ENCODE measurements at regions of chr9 and their contacts with region 1.

Region 1: DNA sequence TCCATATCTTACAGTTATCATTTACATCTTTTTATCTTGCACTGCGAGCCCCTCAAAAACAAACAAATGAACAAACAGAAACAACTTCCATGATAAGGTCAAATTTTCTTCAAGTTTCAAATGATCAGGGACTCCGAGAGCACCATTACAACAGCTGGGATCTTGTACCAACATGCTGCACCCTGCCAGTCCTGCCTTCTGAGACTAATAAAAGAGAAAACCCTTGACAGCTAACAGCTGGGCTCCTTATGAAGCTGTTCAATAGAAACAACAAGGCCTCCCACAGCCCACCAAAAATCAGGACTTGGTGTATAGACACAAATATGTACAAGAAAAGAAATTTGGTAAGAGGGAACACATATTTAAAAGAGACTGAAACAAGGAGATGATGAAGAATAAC is 985.3 kb upstream of the DMAC1 start:
- DNase-seq: no peak
- H3K4me3 ChIP-seq: peak overlapping the region in 19 of 59 donors; percentile 1 to 48 (median 21)
- H3K27ac ChIP-seq: peak overlapping the region in 38 of 59 donors; percentile 1 to 77 (median 52)
- H3K27me3 ChIP-seq: no peaks in the 10 kb centered on the region
- CTCF ChIP-seq: no peak

Region 2: DNA sequence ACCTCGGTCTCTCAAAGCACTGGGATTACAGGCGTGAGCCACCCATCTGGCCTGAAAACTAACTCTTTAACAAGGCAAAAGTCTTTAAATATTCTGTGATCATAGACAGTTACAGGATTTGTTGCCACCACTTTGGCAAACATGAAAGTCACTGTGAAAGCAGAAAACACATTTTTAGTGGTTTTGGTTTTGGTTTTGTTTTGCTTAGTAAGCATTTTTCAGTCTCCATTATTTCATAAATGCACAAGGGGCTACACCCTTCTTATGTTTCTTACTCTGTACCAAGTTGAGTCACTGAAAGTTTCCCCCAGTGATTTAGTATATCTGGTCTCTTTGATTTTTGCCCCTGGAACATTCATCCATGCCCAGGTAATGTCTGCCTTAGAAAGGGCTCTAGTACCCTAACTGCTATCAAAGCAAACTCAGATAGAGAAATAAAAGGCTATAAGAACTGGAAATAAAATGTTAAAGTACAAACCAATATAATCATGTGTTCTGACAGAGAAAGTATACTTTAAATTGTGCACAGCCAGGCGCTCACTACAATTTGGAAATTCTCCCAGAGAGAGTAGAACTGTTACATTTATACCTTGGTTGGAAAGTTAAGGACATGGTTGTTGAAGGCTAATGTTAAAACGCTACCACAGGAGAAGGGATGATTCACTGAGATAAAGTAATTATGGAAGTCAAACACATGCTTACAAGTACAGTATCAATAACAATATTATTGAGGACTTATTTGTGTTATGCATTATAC is 37.2 kb after region 1 on chr9:
- intact Hi-C with region 1: loop called in 1 of 2 experiments (anchors 5 kb)
- DNase-seq: no peak
- H3K4me3 ChIP-seq: no peak overlapping the region
- H3K27ac ChIP-seq: peak overlapping the region in 11 of 59 donors; percentile 1 to 51 (median 21)
- H3K27me3 ChIP-seq: no peaks in the 10 kb centered on the region
- CTCF ChIP-seq: no peak

Region 3: DNA sequence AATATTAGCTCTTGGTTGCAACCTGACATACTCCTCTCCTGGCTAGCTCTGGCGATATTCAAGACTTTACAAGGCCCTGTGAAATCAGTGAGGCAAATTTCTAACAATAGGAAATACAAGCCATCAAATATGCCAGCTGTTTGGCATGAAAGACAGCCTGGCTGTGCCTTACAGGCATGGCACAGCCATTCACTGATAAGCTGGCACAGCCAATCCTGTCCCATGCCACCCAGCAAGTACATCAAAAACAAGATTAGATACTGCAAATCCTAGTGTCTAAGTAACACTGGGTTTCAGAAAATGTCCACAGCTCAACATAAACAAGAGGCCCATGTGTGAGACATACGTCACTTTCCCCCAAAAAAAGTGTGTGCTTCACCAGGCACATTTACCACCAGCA is 60.5 kb after region 1 on chr9:
- intact Hi-C with region 1: loop called in 1 of 2 experiments (anchors 10 kb)
- DNase-seq: peak in 8 of 10 donors; percentile 41 to 84 (median 71)
- H3K4me3 ChIP-seq: peak overlapping the region in 28 of 59 donors; percentile 1 to 50 (median 16)
- H3K27ac ChIP-seq: peak overlapping the region; percentile 32 to 99 (median 92)
- H3K27me3 ChIP-seq: no peaks in the 10 kb centered on the region
- CTCF ChIP-seq: peak in 2 of 56 donors; percentile 11 to 15

Region 4: DNA sequence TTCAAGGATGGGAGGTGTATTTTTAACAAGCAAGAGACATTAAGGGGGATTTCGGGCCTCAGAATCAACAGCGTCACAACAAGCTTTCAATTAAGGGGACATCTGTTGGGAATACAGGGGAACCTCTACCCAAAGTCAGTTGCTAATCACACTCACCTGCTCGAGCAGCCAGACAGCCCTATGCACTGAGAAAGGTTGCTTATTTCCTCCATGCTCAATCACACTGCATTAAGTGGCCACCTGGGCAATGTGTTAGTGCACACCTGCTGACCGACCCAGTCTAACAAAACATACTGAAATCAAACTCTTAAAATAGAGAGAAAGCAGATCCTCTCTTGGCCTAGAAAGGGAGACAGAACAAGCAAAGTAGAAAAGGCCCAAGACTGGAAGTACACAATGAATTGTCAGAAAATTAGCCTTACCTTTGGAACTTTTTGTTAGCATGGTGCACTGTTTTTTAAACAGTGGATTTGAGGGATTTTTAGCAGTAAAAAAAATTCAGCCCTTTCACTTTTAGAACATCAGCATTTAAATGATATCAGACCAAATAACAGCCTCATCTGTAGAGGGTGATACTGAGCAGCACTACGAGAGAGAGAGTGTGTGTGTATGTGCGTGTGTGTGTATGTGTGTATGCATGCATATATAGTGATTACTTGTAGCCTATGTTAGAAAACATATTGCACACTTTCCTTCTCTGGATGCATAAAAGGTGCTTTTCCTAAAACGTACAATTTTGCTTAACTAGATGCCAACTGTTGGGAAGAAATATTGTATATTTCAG is 133.3 kb after region 1 on chr9:
- intact Hi-C with region 1: no loop called
- DNase-seq: no peak
- H3K4me3 ChIP-seq: no peak overlapping the region
- H3K27ac ChIP-seq: peak overlapping the region in 39 of 59 donors; percentile 9 to 99 (median 90)
- H3K27me3 ChIP-seq: no peaks in the 10 kb centered on the region
- CTCF ChIP-seq: no peak

Region 5: DNA sequence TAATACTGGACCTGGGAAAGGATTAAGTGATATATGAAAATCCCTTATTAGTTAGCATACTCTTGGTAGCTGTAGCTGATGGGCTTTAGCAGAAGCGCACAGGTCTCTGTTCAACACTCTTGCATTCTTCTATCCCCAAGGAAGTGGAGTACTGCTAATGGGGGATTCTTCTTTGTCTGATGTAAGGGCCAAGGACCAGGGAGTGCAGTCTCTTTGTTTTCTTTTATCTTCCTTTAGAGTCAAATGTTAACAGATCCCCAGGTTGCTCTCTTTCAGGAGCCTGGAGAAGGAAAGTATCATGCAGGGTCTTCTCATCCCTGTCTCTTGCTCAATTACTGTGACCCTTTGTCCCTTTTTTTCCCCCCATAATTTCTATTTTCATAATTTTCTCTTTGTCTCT is 161.6 kb after region 1 on chr9:
- intact Hi-C with region 1: no loop called
- DNase-seq: no peak
- H3K4me3 ChIP-seq: no peak overlapping the region
- H3K27ac ChIP-seq: no peak overlapping the region
- H3K27me3 ChIP-seq: no peaks in the 10 kb centered on the region
- CTCF ChIP-seq: no peak

Measured in dorsolateral prefrontal cortex (tissue), 120 donors.